Naive thymus-derived CD4-positive, alpha-beta T cell (primary cell): ENCODE measurements at regions of chr6 and their contacts with region 1.

Region 1: GRCh38 chr6:45495429-45496084 is 117.8 kb upstream of the SUPT3H start:
- DNase-seq: peak in 7 of 9 donors; percentile 40 to 61 (median 53)
- ATAC-seq: peak; percentile 76
- H3K4me3 ChIP-seq: no peak overlapping the region
- H3K4me3 Mint-ChIP-seq: peak overlapping the region; percentile 54 to 83 (median 62)
- H3K27ac ChIP-seq: no peak overlapping the region
- H3K27ac Mint-ChIP-seq: peak overlapping the region; percentile 5 to 91 (median 70)
- H3K4me1 ChIP-seq: peaks cover 34 to 37% of the 10 kb centered on the region in 2 donors
- H3K4me1 Mint-ChIP-seq: peaks cover 39 to 55% (median 50%) of the 10 kb centered on the region in 7 donors
- H3K27me3 ChIP-seq: no peaks in the 10 kb centered on the region
- H3K27me3 Mint-ChIP-seq: no peaks in the 10 kb centered on the region

Region 2: GRCh38 chr6:45327956-45328522 is 167.5 kb before region 1 on chr6 and contains the start of gene RUNX2:
- CTCF ChIA-PET with region 1: no interaction called
- POLR2A ChIA-PET with region 1: no interaction called
- intact Hi-C with region 1: no loop called
- DNase-seq: peak in 5 of 9 donors; percentile 7 to 20 (median 14)
- ATAC-seq: peak; percentile 74
- H3K4me3 ChIP-seq: peak within 1 kb of the TSS; percentile 25
- H3K4me3 Mint-ChIP-seq: peak within 1 kb of the TSS; percentile 61 to 87 (median 78)
- H3K27ac ChIP-seq: peak within 1 kb of the TSS; percentile 28
- H3K27ac Mint-ChIP-seq: peak within 1 kb of the TSS; percentile 33 to 89 (median 73)
- H3K4me1 ChIP-seq: peaks cover 6 to 28% of the 10 kb centered on the region in 2 donors
- H3K4me1 Mint-ChIP-seq: peaks cover 26 to 85% (median 63%) of the 10 kb centered on the region in 7 donors
- H3K27me3 ChIP-seq: no peaks in the 10 kb centered on the region
- H3K27me3 Mint-ChIP-seq: no peaks in the 10 kb centered on the region
- total RNA-seq, gene RUNX2: 12.8 to 17.9 (median 14.0) TPM

Region 3: DNA sequence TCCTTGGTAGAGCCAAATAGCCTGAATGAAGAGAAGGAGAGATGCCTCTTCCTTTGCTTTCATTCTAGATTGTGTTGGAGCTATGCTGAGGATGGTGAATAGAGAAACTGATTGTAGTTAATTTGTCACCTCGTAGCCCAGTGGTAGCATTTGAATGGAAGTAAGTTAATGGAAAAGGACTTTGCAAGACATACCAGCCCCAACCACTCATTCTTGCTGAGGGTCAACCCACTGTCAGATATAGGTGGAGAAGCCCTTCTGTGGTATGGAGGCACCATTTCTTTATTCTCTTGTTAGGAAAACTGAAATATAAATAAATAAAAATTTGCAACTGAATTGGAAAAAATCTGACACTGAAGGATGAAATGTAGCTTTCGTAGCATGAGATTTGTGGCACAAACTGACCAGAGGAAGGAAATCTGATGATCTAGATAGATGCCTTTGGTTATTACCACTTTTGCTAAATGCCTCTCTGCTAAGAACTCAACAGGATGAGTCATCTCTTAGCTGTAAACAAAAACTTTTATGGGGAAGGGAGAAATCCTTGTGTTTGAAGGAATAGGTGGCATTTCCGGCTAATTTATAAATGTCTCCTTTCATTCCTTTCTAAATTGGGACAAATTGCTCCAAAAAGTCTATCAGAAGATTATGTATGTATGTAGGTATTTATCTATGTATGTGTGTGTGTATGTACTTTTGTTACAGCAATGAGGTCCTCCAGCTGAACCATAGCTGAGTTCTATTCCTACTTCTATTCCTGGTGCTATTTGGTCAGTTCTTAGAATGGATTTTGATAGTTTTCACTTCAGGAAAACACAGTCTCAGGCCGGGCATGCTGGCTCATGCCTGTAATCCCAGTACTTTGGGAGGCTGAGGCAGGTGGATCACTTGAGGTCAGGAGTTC is 41.3 kb before region 1 on chr6:
- CTCF ChIA-PET with region 1: no interaction called
- POLR2A ChIA-PET with region 1: no interaction called
- intact Hi-C with region 1: loop called in 1 of 2 experiments (anchors 5 kb)
- DNase-seq: no peak
- ATAC-seq: peak; percentile 58
- H3K4me3 ChIP-seq: no peak overlapping the region
- H3K4me3 Mint-ChIP-seq: peak overlapping the region in 1 of 10 donors; percentile 11
- H3K27ac ChIP-seq: no peak overlapping the region
- H3K27ac Mint-ChIP-seq: no peak overlapping the region
- H3K4me1 ChIP-seq: peaks cover 16 to 30% of the 10 kb centered on the region in 2 donors
- H3K4me1 Mint-ChIP-seq: peaks cover 23 to 50% (median 30%) of the 10 kb centered on the region in 7 donors
- H3K27me3 ChIP-seq: no peaks in the 10 kb centered on the region
- H3K27me3 Mint-ChIP-seq: peaks cover 0 to 3% (median 0%) of the 10 kb centered on the region in 5 donors

Region 4: DNA sequence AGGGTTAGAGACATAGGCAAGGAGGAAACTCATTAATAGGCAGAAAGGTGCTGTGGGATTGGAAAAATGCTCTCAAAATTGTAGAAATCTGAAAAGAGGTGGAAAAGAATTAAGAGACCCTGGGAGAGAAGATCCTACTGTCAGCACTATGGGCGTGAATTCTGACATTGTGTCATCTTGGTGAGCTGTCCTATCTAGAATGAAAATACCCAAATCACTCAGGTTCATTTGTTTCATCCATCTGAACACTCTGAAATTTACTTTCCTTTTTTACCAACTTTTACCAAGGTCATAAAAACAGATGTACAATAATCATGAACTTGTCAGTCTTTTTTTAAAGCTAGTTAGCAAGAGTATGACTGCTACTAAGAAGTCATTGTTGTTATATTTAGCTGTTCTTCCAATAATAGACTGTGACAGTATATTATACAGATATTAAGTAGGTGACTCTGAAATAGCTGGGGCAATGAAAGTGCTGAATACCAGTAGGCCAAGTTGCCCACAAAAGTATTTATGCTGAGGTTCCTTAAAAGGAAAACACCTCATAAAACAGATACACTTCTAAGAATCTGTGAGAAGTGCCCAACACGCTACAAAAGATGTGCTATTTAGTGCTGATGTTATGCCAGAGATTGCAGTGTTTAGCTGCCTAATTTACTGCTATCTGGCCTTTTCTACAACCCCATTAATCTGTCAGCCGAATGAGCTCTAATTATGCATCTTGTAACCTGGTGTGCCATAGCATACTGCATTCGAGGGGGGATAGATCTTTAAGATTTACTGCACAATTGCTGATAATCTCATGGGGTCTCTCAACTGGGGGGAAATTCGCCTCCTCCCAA is 99.7 kb after region 1 on chr6:
- CTCF ChIA-PET with region 1: no interaction called
- POLR2A ChIA-PET with region 1: no interaction called
- intact Hi-C with region 1: no loop called
- DNase-seq: no peak
- ATAC-seq: no peak
- H3K4me3 ChIP-seq: no peak overlapping the region
- H3K4me3 Mint-ChIP-seq: no peak overlapping the region
- H3K27ac ChIP-seq: no peak overlapping the region
- H3K27ac Mint-ChIP-seq: peak overlapping the region in 3 of 9 donors; percentile 19 to 42 (median 22)
- H3K4me1 ChIP-seq: peaks cover 0 to 7% of the 10 kb centered on the region in 2 donors
- H3K4me1 Mint-ChIP-seq: peaks cover 6 to 42% (median 29%) of the 10 kb centered on the region in 7 donors
- H3K27me3 ChIP-seq: no peaks in the 10 kb centered on the region
- H3K27me3 Mint-ChIP-seq: no peaks in the 10 kb centered on the region

Region 5: GRCh38 chr6:45663551-45664221 is 168.1 kb after region 1 on chr6:
- CTCF ChIA-PET with region 1: no interaction called
- POLR2A ChIA-PET with region 1: no interaction called
- intact Hi-C with region 1: loop called in 1 of 2 experiments (anchors 10 kb)
- DNase-seq: peak in 8 of 9 donors; percentile 14 to 55 (median 47)
- ATAC-seq: peak; percentile 72
- H3K4me3 ChIP-seq: peak overlapping the region; percentile 46
- H3K4me3 Mint-ChIP-seq: peak overlapping the region; percentile 34 to 84 (median 71)
- H3K27ac ChIP-seq: no peak overlapping the region
- H3K27ac Mint-ChIP-seq: peak overlapping the region in 1 of 9 donors; percentile 32
- H3K4me1 ChIP-seq: peaks cover 0 to 12% of the 10 kb centered on the region in 2 donors
- H3K4me1 Mint-ChIP-seq: peaks cover 7 to 57% (median 43%) of the 10 kb centered on the region in 7 donors
- H3K27me3 ChIP-seq: no peaks in the 10 kb centered on the region
- H3K27me3 Mint-ChIP-seq: peaks cover 0 to 31% (median 17%) of the 10 kb centered on the region in 5 donors